Activated T-helper 1 cell treated with anti-CD3 and anti-CD28 coated beads, Interleukin-12 subunit alpha, Interleukin-12 subunit beta, Interleukin-2, Interleukin-4 antibody, amounts not matched to agents 30 ng/mL and 10 ng/mL and 1 ng/mL, durations not matched to agents 14 hours and 24 hours and 36 hours (primary cell): ENCODE measurements at regions of chr3 and their contacts with region 1.

Region 1: DNA sequence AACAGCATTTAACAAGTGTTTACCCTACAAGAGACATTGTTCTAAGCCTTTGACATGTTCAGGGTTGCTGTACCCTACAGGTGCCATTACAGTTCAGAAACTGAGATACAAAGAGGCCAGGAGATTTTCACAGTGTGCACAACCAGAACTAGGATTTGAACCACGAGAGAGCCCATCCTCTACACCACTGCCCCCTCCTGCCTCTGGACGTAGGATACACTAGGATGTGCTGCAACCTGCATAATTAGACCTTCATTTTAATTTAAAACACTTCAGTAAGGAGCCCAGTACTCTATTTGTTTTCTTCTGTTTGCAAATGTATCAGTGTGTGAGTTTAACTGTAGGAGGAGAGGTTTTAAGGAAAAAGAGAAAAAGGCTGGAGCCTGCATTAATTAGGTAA is 123.1 kb upstream of the RARB start:
- DNase-seq: no peak
- H3K4me3 Mint-ChIP-seq: no peak overlapping the region
- H3K27ac Mint-ChIP-seq: no peak overlapping the region
- H3K4me1 Mint-ChIP-seq: no peaks in the 10 kb centered on the region
- H3K27me3 Mint-ChIP-seq: no peaks in the 10 kb centered on the region

Region 2: DNA sequence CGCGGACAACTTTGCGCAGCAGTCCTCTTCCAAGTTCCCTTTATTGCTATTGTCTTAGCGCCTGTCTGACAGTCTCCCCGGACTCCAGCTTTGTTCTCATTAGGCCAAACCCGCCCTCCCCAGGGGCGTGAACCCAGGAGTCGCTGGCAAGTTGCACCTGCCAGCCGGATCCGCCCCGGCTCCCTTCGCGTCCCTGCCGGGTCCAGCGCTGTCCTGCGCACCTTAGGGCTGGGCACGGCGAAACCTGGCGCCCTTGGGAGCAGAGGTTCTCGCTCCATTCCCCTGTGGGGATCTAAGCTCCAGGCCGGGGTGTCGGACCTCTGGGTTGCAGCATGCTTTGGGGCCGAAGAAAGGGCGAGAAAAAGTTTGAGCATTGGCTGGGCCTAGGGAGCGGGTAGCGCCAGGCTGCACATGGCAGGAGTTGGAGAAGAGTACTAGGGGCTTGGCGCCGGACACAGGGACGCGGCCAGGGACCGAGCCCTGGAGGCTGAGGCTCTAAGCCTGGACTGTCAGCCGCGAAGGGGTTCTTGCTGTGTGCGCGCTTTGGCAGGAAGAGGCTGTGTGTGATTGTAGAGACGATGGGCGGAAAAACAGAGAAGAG is 475.2 kb before region 1 on chr3:
- intact Hi-C with region 1: loop called (anchors 5 kb)
- DNase-seq: no peak
- H3K4me3 Mint-ChIP-seq: no peak overlapping the region
- H3K27ac Mint-ChIP-seq: no peak overlapping the region
- H3K4me1 Mint-ChIP-seq: no peaks in the 10 kb centered on the region
- H3K27me3 Mint-ChIP-seq: peaks cover 19% of the 10 kb centered on the region

Region 3: GRCh38 chr3:25354071-25354470 is 49.2 kb after region 1 on chr3:
- intact Hi-C with region 1: no loop called
- DNase-seq: no peak
- H3K4me3 Mint-ChIP-seq: no peak overlapping the region
- H3K27ac Mint-ChIP-seq: no peak overlapping the region
- H3K4me1 Mint-ChIP-seq: no peaks in the 10 kb centered on the region
- H3K27me3 Mint-ChIP-seq: no peaks in the 10 kb centered on the region

Region 4: DNA sequence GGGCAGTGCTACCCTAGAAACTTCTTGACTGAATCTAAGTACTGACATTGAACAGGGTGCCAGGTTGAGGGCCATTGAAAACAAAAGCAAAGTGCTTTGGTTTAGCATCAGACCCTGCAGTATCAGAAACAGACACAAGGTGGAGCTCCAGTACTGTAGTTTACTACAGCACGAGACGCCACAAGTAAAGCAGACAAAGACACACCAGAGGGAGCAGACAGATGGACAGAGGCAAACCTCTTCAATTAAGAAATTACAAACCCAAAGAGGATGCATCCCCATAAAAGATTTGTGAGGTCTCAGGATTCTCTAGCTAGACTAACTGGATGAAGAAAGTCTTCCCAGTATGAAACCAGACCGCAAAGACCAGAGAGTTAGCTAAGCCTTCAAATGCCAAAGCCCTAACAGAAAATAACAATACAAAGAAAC is 343.2 kb after region 1 on chr3:
- intact Hi-C with region 1: no loop called
- DNase-seq: peak; percentile 71
- H3K4me3 Mint-ChIP-seq: no peak overlapping the region
- H3K27ac Mint-ChIP-seq: peak overlapping the region; percentile 14
- H3K4me1 Mint-ChIP-seq: peaks cover 22% of the 10 kb centered on the region
- H3K27me3 Mint-ChIP-seq: no peaks in the 10 kb centered on the region